ENCODE measurements at regions of chr14 and their contacts with region 1.

Region 1: GRCh38 chr14:72516936-72517700 is 376.8 kb downstream of the DPF3 start:
- DNase-seq: peak; percentile 80
- H3K4me3 ChIP-seq: no peak overlapping the region
- CTCF ChIP-seq: peak; percentile 91

Region 2: GRCh38 chr14:72926292-72927028 is 409.3 kb after region 1 on chr14 and contains the start of gene DCAF4:
- in situ Hi-C with region 1: loop called (anchors 10 kb)
- DNase-seq: peak; percentile 98
- H3K4me3 ChIP-seq: peak within 1 kb of the TSS; percentile 85
- CTCF ChIP-seq: no peak

Measured in astrocyte of the cerebellum (primary cell).